HEK293 (cell line): ENCODE measurements at regions of chr16 and their contacts with region 1.

Region 1: DNA sequence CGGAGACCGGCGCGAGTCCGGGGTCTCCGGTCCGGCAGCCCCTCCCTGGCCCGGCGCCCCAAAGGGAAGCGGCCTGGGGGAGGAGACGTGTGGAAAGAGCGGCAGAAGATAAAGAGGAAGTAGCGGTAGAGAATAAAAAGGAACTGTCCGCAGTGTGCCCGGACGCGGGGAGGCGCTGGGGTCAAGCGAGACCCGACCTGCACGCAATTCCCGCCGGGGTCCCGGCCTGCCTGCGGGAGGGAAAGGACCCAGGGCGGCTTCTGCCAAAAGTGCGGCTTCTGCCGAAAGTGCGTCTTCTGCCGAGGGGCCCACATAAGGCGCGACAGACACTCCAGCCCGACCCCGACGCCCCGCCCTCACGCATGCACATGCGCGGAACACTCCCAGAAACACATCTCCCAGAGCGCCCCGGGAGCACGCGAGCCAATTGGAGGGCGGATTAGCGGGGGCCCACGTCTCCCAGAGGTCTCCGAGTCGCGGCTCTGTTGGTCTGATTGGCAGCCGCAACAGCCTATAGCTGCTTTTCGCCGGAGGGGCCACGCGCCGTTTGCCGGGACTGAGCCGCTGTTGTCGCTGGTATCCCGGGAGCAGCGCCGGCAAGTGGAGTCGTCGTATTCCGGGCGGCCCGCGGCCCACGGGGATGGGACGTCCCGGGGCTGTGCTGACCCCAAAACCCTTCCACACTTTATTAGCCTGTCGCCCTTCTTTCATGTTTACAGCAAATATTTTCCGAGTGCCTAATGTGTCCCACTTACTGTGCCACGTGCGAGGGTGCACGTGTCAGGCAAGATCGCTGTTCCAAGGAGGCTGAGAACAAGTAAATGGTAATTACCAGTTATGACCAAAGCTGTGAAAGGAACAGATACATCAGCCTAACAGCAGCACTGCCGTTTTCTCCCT is 8.0 kb upstream of the MEFV start:
- H3K4me3 ChIP-seq: peak overlapping the region; percentile 73
- H3K27ac ChIP-seq: peak overlapping the region; percentile 69
- H3K4me1 ChIP-seq: no peaks in the 10 kb centered on the region
- CTCF ChIP-seq: peak; percentile 71; the same call in 1 of the 2 replicates

Region 2: GRCh38 chr16:3276679-3277078 is 12.3 kb after region 1 on chr16:
- CTCF ChIA-PET with region 1: interaction called, 35 read pairs
- POLR2A ChIA-PET with region 1: interaction called, 3 read pairs
- H3K4me3 ChIP-seq: no peak overlapping the region
- H3K27ac ChIP-seq: no peak overlapping the region
- H3K4me1 ChIP-seq: no peaks in the 10 kb centered on the region
- CTCF ChIP-seq: no peak

Region 3: DNA sequence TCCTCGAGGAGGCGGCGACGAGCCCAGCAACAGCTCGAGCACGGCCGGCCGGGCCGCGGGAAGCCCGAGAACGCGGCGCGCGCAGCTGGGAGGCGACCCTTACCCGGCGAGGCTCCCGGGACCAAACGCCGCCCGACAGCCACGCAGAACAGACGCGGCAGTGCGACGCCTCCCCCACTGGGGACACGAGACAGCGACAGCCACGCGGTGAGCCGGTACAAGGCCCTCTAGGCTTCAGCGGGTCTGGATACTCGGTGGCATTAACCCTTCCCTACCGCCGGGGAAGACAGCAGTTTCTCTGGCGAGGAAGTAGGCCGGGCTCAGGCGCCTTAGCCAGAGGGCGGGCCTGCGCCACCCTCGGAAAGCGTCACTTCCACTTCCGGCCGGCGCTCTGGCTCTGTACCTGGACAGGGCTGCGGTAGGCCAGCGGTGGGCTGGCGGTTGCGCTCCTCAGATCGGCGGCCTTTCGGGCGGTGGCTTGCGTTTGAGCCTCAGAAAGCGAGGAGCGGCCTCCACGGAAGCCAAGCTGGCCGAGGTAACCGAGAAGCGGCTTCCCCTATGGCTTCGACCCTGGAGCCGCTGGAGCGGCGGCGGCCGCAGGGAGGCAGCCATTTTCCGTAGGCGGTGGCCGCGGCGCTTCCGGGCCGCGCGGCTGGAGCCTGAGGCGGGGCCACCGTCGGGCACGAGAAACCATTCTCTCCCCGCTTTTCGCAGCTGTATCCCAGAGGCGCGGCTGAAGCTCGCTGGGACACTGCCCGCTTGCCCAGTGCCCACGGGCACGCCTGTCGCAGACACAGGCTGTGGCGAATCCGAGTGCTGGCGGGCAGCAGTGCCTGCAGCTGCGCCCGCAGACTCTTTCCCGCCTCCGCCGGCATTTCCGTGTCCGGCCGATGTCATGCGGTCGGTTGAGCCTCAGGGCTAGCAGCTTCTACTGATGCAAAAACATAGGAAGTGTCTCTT is 41.0 kb after region 1 on chr16 and contains the starts of genes TIGD7 and ZNF75A:
- CTCF ChIA-PET with region 1: interaction called, 13 read pairs
- POLR2A ChIA-PET with region 1: interaction called, 3 read pairs
- H3K4me3 ChIP-seq: peak within 1 kb of the TSS; percentile 77
- H3K27ac ChIP-seq: peak within 1 kb of the TSS; percentile 64
- H3K4me1 ChIP-seq: no peaks in the 10 kb centered on the region
- CTCF ChIP-seq: peak; percentile 31; the same call in 1 of the 2 replicates